ENCODE measurements at regions of chr3 and their contacts with region 1.

Region 1: GRCh38 chr3:9843715-9844438 is at the start of gene RPUSD3:
- DNase-seq: peak; percentile 99
- ATAC-seq: peak; percentile 96
- H3K4me3 ChIP-seq: peak within 1 kb of the TSS; percentile 90
- H3K27ac ChIP-seq: peak within 1 kb of the TSS; percentile 62
- H3K4me1 ChIP-seq: peaks cover 19% of the 10 kb centered on the region
- H3K27me3 ChIP-seq: no peaks in the 10 kb centered on the region
- CTCF ChIP-seq: no peak
- total RNA-seq, gene RPUSD3: 54.1 and 76.1 TPM in 2 replicates

Region 2: GRCh38 chr3:9721015-9721699 is 122.7 kb before region 1 on chr3:
- CTCF ChIA-PET with region 1: no interaction called
- POLR2A ChIA-PET with region 1: no interaction called
- intact Hi-C with region 1: no loop called
- DNase-seq: no peak
- ATAC-seq: peak; percentile 38; the same call in 1 of the 2 replicates
- H3K4me3 ChIP-seq: no peak overlapping the region
- H3K27ac ChIP-seq: no peak overlapping the region
- H3K4me1 ChIP-seq: peaks cover 1% of the 10 kb centered on the region
- H3K27me3 ChIP-seq: no peaks in the 10 kb centered on the region
- CTCF ChIP-seq: no peak

Region 3: DNA sequence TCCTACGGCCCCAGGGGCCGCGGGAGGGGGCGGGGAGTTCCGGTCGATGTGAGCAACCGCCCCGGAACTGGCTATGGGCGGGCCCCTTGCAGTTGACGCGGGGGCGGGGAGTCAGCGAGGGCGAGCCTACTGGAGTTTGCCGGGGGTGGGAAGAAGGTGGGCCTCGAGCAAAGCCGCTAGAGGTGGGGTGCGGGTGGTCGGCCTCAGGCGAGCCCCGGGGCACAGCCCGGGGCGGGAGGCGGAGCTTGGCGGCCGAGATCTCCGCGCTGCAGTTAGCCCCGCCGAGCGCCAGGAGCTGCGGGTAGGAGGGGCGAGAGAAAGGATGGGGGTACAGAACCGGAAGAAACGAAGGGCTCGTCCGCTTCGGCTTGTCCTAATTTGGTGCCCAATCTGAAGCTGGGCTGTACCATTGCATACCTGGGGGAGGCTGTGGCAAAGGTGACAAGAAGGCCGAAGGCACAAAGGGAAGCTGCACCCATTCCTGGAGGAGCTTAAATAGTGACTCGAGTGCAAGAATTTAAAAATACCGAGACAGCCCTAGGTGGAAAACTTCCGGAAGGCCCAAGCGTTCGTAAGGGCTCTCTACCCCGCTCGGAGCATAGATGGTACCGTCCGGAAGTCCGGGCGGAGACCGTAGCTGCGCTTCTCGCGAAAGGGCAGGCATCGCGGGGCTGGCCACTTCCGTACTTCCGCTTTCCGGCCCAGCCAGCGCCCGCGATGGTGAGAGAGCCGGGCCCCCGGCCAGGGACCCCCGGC is 51.3 kb before region 1 on chr3 and contains the starts of genes ARPC4 and TADA3:
- CTCF ChIA-PET with region 1: no interaction called
- POLR2A ChIA-PET with region 1: no interaction called
- intact Hi-C with region 1: no loop called
- DNase-seq: peak; percentile 90
- ATAC-seq: peak; percentile 88
- H3K4me3 ChIP-seq: peak within 1 kb of the TSS; percentile 99
- H3K27ac ChIP-seq: peak within 1 kb of the TSS; percentile 79
- H3K4me1 ChIP-seq: peaks cover 11% of the 10 kb centered on the region
- H3K27me3 ChIP-seq: no peaks in the 10 kb centered on the region
- CTCF ChIP-seq: no peak
- total RNA-seq, gene ARPC4: 131 and 223 TPM in 2 replicates
- total RNA-seq, gene TADA3: 85.4 and 85.9 TPM in 2 replicates

Region 4: DNA sequence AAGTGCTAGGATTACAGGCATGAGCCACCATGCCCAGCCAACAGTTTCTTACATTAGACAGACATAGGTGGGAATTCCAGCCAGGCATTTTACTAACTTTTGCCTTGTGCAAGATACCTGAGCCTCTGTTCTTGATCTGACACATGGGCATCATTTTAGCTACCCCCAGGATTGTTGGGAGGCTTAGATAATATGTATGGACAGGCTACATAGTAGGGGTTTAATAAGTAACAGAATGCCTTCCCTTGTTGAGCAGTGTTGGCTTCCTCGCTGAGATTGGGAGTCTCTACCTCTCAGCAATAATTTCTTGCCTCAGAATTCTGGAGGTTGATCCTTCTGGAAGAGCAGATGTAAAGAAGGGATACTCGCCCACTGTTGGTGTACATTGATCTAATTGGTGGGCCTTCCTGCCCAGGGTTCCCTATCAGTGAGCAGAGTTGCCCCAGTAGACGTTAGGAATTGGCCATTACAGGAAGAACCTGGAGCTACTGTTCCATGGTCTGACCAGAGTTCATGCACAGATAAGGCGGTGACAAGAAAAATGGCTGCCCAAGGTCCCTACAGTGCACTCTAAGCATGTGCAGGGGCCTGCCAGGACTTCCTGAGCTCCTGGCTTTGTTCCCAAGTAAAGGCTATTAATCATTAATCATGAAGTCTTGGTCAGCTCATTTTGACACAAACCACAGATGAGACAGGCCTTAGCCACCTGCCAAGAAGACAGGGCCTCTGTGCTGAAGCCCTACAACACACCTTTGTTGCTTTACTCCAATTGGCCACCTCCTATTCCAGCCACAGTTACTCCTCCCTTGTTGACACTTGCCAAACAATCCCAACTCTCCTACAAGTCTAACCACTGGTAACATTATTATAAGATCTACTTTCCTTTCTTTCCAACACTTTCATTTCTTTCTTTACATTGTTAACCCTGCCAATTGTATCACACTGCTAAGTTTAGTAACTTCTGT is 53.8 kb after region 1 on chr3:
- CTCF ChIA-PET with region 1: no interaction called
- POLR2A ChIA-PET with region 1: interaction called, 3 read pairs
- intact Hi-C with region 1: loop called (anchors 5 kb)
- DNase-seq: peak; percentile 99
- ATAC-seq: peak; percentile 85
- H3K4me3 ChIP-seq: peak overlapping the region; percentile 46
- H3K27ac ChIP-seq: peak overlapping the region; percentile 93
- H3K4me1 ChIP-seq: peaks cover 57% of the 10 kb centered on the region
- H3K27me3 ChIP-seq: no peaks in the 10 kb centered on the region
- CTCF ChIP-seq: no peak

Region 5: GRCh38 chr3:9932843-9933560 is 89.1 kb after region 1 on chr3:
- CTCF ChIA-PET with region 1: interaction called, 10 read pairs
- POLR2A ChIA-PET with region 1: no interaction called
- intact Hi-C with region 1: loop called (anchors 1 kb)
- DNase-seq: peak; percentile 84
- ATAC-seq: peak; percentile 71
- H3K4me3 ChIP-seq: peak overlapping the region; percentile 72
- H3K27ac ChIP-seq: peak overlapping the region; percentile 84
- H3K4me1 ChIP-seq: peaks cover 33% of the 10 kb centered on the region
- H3K27me3 ChIP-seq: no peaks in the 10 kb centered on the region
- CTCF ChIP-seq: peak; percentile 84

Region 6: GRCh38 chr3:10026084-10026890 is 182.4 kb after region 1 on chr3 and contains the start of gene FANCD2:
- CTCF ChIA-PET with region 1: no interaction called
- POLR2A ChIA-PET with region 1: no interaction called
- intact Hi-C with region 1: loop called (anchors 10 kb)
- DNase-seq: peak; percentile 93
- ATAC-seq: peak; percentile 87
- H3K4me3 ChIP-seq: peak within 1 kb of the TSS; percentile 94
- H3K27ac ChIP-seq: peak within 1 kb of the TSS; percentile 67
- H3K4me1 ChIP-seq: peaks cover 27% of the 10 kb centered on the region
- H3K27me3 ChIP-seq: no peaks in the 10 kb centered on the region
- CTCF ChIP-seq: no peak
- total RNA-seq, gene FANCD2: 58.7 and 67.9 TPM in 2 replicates

Region 7: DNA sequence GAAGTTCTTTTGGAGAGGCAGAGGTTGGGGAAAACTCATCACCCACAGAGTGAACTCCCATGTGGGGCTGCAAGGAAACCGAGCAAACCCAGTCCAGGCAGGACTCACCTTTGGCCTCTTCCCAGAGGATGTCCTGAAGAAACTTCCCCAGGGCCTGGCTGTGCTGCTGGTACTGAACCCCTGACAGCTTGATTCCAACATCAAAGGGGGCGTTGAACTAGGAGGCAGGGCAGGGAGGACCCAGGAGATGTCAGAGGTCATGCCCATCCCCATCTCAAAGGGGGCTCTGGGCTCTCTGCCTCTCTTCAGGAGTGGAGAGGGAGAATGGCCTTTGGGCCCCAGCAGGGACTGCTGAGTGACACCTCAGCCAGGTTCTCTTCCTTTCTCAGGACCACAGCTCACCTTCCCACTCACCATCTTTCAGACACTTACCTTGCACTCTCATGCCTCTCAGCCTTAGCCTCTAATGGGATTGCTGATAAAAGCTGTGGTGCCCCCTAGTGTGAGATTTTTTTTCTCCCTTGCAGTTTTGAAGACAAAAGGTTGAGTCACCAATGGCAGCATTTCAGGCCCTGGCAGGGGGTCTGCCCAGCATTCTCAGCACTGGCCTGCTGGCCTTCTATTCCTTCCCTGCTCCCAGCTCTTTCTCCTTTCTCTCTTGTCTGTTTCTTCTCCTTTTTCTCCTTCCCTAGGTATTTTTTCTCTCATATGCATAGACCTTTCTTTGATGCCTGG is 442.9 kb after region 1 on chr3:
- CTCF ChIA-PET with region 1: no interaction called
- POLR2A ChIA-PET with region 1: no interaction called
- intact Hi-C with region 1: loop called (anchors 10 kb)
- DNase-seq: peak; percentile 88
- ATAC-seq: peak; percentile 77
- H3K4me3 ChIP-seq: no peak overlapping the region
- H3K27ac ChIP-seq: no peak overlapping the region
- H3K4me1 ChIP-seq: peaks cover 12% of the 10 kb centered on the region
- H3K27me3 ChIP-seq: no peaks in the 10 kb centered on the region
- CTCF ChIP-seq: peak; percentile 88

Region 8: GRCh38 chr3:10437272-10437994 is 593.6 kb after region 1 on chr3:
- CTCF ChIA-PET with region 1: no interaction called
- POLR2A ChIA-PET with region 1: no interaction called
- intact Hi-C with region 1: no loop called
- DNase-seq: peak; percentile 10
- ATAC-seq: peak; percentile 53
- H3K4me3 ChIP-seq: no peak overlapping the region
- H3K27ac ChIP-seq: no peak overlapping the region
- H3K4me1 ChIP-seq: no peaks in the 10 kb centered on the region
- H3K27me3 ChIP-seq: no peaks in the 10 kb centered on the region
- CTCF ChIP-seq: no peak